Activated B cell treated with CpG ODN at 0.5 μM for 24 hours (primary cell): ENCODE measurements at regions of chr18 and their contacts with region 1.

Region 1: DNA sequence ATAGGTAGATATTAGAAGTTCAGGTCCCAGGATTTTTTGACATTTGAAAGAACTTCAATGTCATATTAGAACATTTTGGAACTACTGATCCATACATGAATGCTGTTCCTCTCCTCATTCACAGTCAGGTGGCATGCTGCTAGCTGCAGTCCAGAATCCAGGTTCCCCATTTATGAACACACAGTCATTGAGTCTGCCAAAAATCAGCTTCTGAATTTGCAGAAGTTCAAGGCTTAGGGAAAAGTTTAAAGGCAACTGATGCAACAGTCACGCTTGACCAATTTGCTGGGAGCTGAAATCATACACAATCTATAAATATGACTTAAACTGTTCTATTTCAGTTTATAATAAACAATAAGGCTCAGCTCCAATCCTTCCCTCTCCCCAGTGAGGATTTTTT is 17.3 kb upstream of the TTR start:
- DNase-seq: no peak
- ATAC-seq: no peak
- H3K4me3 Mint-ChIP-seq: no peak overlapping the region
- H3K27ac Mint-ChIP-seq: no peak overlapping the region
- H3K4me1 Mint-ChIP-seq: no peaks in the 10 kb centered on the region
- H3K27me3 Mint-ChIP-seq: no peaks in the 10 kb centered on the region
- CTCF ChIP-seq: no peak

Region 2: DNA sequence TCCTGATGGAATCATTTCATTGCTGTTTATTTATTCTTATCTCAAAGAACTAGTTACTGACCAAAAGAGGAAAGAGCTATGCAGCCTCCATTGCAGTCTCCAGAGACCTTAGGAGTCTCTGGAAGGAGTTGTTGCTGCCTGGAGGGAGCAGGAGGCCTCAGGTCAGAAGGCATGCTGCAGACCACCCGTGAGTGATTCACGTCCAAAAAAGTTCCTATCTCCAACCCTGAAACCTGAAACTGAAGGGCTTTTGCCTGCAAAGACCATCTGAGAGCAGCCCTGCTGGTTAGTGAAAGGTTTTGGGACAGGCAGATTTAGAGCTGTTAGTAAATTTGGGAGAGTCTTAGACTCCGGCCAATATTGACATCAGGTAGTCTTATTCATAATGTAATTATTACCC is 157.3 kb after region 1 on chr18:
- CTCF ChIA-PET with region 1: no interaction called
- POLR2A ChIA-PET with region 1: interaction called, 13 read pairs
- intact Hi-C with region 1: no loop called
- DNase-seq: no peak
- ATAC-seq: no peak
- H3K4me3 Mint-ChIP-seq: no peak overlapping the region
- H3K27ac Mint-ChIP-seq: no peak overlapping the region
- H3K4me1 Mint-ChIP-seq: no peaks in the 10 kb centered on the region
- H3K27me3 Mint-ChIP-seq: peaks cover 9% of the 10 kb centered on the region
- CTCF ChIP-seq: no peak